Motor neuron (in vitro differentiated cells): ENCODE measurements at regions of chr3 and their contacts with region 1.

Region 1: GRCh38 chr3:187164885-187165543 is 25.7 kb upstream of the RPL39L start:
- ATAC-seq: peak in 3 of 8 experiments; percentile 13 to 69 (median 15)
- H3K4me3 ChIP-seq: no peak overlapping the region
- H3K27ac ChIP-seq: no peak overlapping the region
- H3K4me1 ChIP-seq: no peaks in the 10 kb centered on the region

Region 2: DNA sequence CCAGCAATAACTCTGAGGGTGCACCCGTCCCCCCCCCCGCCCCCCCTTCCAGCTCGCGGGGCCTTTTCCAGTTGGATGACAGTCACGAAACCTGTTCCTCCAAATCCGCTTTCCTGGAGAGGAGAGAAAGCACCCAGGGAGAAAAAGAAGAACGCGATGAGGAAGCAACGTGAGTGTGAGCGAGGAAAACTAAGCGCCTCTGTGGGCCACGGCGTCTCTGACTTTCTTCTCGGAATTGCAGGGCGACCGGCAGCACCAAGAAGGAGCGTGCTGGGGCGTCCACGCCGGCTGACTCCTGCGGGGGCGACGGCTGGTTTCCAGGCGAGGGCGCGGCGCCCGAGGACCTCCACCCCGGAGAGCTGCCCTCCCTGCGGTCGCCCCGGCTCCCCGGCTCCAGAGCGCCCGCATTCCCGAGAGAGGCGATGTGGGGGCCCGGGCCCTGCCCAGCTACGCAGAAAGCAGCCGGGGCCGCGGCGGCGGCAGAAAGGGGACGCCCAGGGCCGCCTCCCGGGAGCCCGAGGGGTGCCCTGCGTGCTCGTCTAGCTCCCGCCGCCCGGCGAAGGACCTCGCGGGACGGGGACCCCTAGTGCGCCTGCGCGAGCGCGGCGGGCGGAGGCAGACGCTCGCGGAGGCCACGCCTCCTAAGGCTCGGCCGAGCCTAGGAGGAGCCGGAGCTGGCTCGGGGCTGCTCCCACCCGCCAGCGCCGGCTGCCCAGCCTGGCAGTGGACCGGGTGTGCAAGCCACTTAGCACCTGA is 337.9 kb before region 1 on chr3:
- in situ Hi-C with region 1: loop called in 6 of 9 experiments (anchors 25 kb)
- ATAC-seq: peak; percentile 60 to 86 (median 78)
- H3K4me3 ChIP-seq: peak overlapping the region; percentile 42 to 64 (median 55)
- H3K27ac ChIP-seq: no peak overlapping the region
- H3K4me1 ChIP-seq: peaks cover 24 to 26% of the 10 kb centered on the region in 2 donors

Region 3: GRCh38 chr3:186849374-186849975 is 315.5 kb before region 1 on chr3:
- in situ Hi-C with region 1: loop called in 8 of 9 experiments (anchors 10 to 25 kb)
- ATAC-seq: peak in 6 of 8 experiments; percentile 26 to 72 (median 50)
- H3K4me3 ChIP-seq: no peak overlapping the region
- H3K27ac ChIP-seq: no peak overlapping the region
- H3K4me1 ChIP-seq: no peaks in the 10 kb centered on the region

Region 4: GRCh38 chr3:186871403-186871924 is 293.6 kb before region 1 on chr3:
- in situ Hi-C with region 1: loop called in 1 of 9 experiments (anchors 25 kb)
- ATAC-seq: no peak
- H3K4me3 ChIP-seq: no peak overlapping the region
- H3K27ac ChIP-seq: no peak overlapping the region
- H3K4me1 ChIP-seq: no peaks in the 10 kb centered on the region

Region 5: DNA sequence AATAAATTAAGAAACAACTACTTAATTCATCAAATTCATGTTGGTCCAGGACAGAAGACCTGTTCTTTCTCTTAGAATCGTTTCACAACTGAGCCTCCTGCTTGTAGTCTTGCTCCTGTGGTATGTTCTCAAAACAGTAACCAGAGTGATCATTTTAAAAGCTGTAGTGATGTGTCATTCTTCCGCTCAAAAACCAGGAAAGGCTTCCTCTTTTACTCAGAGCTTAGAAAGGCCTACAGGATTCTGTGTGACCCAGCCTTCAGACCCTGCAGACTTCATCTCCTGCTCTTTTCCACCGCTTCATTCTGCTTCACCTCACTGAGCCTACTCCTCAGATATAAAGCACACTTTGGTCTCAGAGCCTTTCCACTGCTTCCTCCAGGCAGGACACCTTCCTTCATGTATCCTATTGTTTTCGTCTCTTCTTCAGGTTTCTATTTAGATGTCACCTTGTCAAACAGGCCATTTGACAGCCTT is 212.0 kb before region 1 on chr3:
- in situ Hi-C with region 1: no loop called
- ATAC-seq: no peak
- H3K4me3 ChIP-seq: no peak overlapping the region
- H3K27ac ChIP-seq: no peak overlapping the region
- H3K4me1 ChIP-seq: peaks cover 0 to 2% of the 10 kb centered on the region in 2 donors